Activated CD4-positive, alpha-beta T cell treated with anti-CD3 and anti-CD28 coated beads for 36 hours (primary cell): ENCODE measurements at regions of chr17 and their contacts with region 1.

Region 1: GRCh38 chr17:62109378-62109902 is 44.4 kb upstream of the MED13 start:
- DNase-seq: peak; percentile 84
- ATAC-seq: peak; percentile 100
- H3K4me3 Mint-ChIP-seq: no peak overlapping the region
- H3K27ac Mint-ChIP-seq: no peak overlapping the region
- H3K4me1 Mint-ChIP-seq: no peaks in the 10 kb centered on the region
- H3K27me3 Mint-ChIP-seq: no peaks in the 10 kb centered on the region

Region 2: DNA sequence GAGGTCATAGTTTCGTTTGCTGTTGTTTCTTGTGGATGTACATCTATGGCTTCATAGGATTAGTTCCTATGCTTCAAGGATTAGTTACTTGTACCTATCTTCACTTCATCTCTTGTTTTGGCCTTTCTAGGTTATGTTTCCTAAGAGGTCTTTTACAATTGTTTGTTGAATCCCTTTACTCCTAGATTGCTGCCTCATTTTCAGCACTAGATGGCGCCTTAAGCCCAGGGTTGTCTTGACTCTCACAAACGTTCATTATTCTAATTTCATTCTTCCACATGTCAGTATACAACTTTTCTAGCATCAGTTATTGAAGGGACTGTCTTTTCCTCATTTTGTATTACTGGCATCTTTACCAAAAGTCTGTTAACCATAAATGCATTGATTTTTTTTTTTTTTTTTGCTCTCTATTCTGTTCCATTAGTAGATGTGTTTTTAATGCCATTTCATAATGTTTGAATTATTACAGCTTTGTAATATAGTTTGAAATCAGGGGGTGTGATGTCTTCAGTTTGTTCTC is 473.5 kb before region 1 on chr17:
- CTCF ChIA-PET with region 1: interaction called, 7 read pairs
- POLR2A ChIA-PET with region 1: no interaction called
- intact Hi-C with region 1: loop called in 1 of 2 experiments (anchors 1 kb)
- DNase-seq: peak; percentile 72
- ATAC-seq: no peak
- H3K4me3 Mint-ChIP-seq: no peak overlapping the region
- H3K27ac Mint-ChIP-seq: no peak overlapping the region
- H3K4me1 Mint-ChIP-seq: no peaks in the 10 kb centered on the region
- H3K27me3 Mint-ChIP-seq: peaks cover 43% of the 10 kb centered on the region

Region 3: DNA sequence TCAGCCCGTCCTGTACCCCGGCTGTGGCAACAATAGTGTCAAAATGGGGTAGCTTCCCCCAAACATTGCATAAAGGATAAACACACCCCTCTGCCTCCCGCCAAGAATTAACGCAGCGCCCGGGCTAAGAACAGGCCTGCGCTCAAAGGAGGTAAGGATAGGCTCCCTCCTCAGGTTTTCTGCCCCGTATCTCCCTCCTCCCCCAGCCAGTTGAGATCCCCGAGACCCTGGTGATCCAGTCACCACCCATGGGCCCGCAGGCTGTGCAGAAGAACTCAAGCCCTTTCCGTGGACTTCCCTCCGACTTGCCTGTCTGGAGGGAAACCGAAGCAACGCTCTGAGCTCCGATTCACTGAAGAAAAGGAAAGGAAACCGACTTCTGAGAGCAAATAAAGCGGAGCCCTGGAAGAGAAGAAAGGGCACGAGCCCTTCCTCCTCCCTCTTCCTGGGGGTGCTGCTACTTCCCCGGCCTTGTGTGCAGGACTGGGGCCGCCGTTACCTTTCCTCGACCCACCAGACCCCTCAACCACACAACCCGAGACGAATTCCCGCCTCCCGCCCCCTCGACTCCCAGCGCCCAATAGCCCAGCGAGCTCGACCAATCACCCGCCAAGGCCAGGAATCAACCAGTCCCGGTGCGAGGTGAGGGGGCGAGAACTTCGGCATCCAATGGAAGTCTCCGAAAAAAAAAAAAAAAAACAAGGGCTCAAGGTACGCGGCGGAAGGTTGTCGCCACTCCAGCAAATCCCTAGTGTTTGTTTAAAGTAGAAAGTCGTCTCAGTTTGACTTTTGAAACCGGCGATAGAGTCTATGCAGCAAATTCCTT is 246.3 kb before region 1 on chr17 and contains the start of gene BRIP1:
- CTCF ChIA-PET with region 1: interaction called, 12 read pairs
- POLR2A ChIA-PET with region 1: no interaction called
- intact Hi-C with region 1: loop called in 1 of 2 experiments (anchors 1 kb)
- DNase-seq: peak; percentile 95
- ATAC-seq: peak; percentile 97
- H3K4me3 Mint-ChIP-seq: peak within 1 kb of the TSS; percentile 96
- H3K27ac Mint-ChIP-seq: peak within 1 kb of the TSS; percentile 91
- H3K4me1 Mint-ChIP-seq: peaks cover 26% of the 10 kb centered on the region
- H3K27me3 Mint-ChIP-seq: no peaks in the 10 kb centered on the region
- total RNA-seq, gene BRIP1: 15.4 to 16.2 TPM

Region 4: GRCh38 chr17:61904094-61904710 is 205.2 kb before region 1 on chr17:
- CTCF ChIA-PET with region 1: no interaction called
- POLR2A ChIA-PET with region 1: no interaction called
- intact Hi-C with region 1: no loop called
- DNase-seq: peak; percentile 44
- ATAC-seq: peak; percentile 85
- H3K4me3 Mint-ChIP-seq: no peak overlapping the region
- H3K27ac Mint-ChIP-seq: no peak overlapping the region
- H3K4me1 Mint-ChIP-seq: no peaks in the 10 kb centered on the region
- H3K27me3 Mint-ChIP-seq: no peaks in the 10 kb centered on the region